IMR-90 (cell line): ENCODE measurements at regions of chr6 and their contacts with region 1.

Region 1: DNA sequence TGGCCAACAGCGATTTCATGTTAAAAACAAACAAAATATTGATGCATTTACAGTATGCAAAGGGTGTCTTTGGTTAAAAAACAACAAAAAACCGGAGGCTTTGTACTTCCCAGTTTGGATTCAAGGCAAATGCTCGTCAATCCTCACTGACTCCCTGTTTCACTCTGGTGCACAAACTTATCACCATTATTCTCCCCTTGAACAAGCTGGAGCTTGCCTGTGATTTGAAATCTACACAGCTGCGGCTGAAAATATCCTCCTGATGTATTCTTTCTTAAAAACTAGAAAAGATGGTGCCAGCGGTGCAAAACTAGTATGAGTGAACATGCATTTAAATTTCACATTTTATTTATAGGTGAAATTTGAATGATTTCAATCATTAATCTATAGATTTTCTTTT is 3.3 kb downstream of the PERP start:
- DNase-seq: no peak
- ATAC-seq: no peak
- H3K4me3 ChIP-seq: no peak overlapping the region
- H3K27ac ChIP-seq: no peak overlapping the region
- H3K4me1 ChIP-seq: peaks cover 19% of the 10 kb centered on the region
- H3K27me3 ChIP-seq: peaks cover 5% of the 10 kb centered on the region; the same call in 1 of the 2 replicates
- CTCF ChIP-seq: no peak
- POLR2A ChIP-seq: no peak
- RAD21 ChIP-seq: no peak

Region 2: GRCh38 chr6:138088330-138088766 is 15.5 kb before region 1 on chr6:
- CTCF ChIA-PET with region 1: no interaction called
- POLR2A ChIA-PET with region 1: no interaction called
- dilution Hi-C with region 1: no loop called
- in situ Hi-C with region 1: no loop called
- intact Hi-C with region 1: loop called (anchors 1 kb)
- DNase-seq: peak; percentile 97
- ATAC-seq: peak; percentile 89
- H3K4me3 ChIP-seq: peak overlapping the region; percentile 21; the same call in 1 of the 2 replicates
- H3K27ac ChIP-seq: peak overlapping the region; percentile 96
- H3K4me1 ChIP-seq: peaks cover 25% of the 10 kb centered on the region
- H3K27me3 ChIP-seq: no peaks in the 10 kb centered on the region
- CTCF ChIP-seq: no peak
- POLR2A ChIP-seq: no peak
- RAD21 ChIP-seq: no peak